Calu3 (cell line): ENCODE measurements at regions of chr6 and their contacts with region 1.

Region 1: DNA sequence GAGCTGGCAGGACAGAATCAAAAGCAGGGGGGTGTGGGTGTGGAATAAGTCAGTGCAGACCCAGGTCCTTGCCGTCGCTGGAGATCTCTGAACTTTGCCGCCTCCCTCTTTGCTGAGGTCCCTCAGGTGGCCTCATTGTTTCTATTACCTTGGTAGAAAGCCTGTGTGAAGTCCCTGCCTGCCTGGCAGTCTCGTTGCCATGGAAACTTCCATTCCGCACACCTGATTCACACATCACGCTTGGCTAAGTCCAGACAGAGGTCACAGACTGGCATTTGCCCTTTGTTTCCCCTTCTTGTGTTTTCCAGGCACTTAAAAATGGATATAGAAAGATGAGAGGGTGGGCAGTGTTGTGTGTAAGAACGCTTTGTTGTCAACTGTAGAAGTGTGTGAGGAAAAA is 260.6 kb downstream of the PRL start:
- DNase-seq: peak; percentile 92
- H3K4me3 Mint-ChIP-seq: peak overlapping the region; percentile 43
- H3K27ac Mint-ChIP-seq: peak overlapping the region; percentile 97
- H3K4me1 Mint-ChIP-seq: peaks cover 35% of the 10 kb centered on the region
- H3K27me3 Mint-ChIP-seq: no peaks in the 10 kb centered on the region
- CTCF ChIP-seq: no peak

Region 2: GRCh38 chr6:21731411-21732031 is 304.8 kb before region 1 on chr6:
- CTCF ChIA-PET with region 1: no interaction called
- intact Hi-C with region 1: loop called (anchors 1 kb)
- DNase-seq: peak; percentile 74
- H3K4me3 Mint-ChIP-seq: no peak overlapping the region
- H3K27ac Mint-ChIP-seq: peak overlapping the region; percentile 22
- H3K4me1 Mint-ChIP-seq: peaks cover 62% of the 10 kb centered on the region
- H3K27me3 Mint-ChIP-seq: no peaks in the 10 kb centered on the region
- CTCF ChIP-seq: no peak

Region 3: DNA sequence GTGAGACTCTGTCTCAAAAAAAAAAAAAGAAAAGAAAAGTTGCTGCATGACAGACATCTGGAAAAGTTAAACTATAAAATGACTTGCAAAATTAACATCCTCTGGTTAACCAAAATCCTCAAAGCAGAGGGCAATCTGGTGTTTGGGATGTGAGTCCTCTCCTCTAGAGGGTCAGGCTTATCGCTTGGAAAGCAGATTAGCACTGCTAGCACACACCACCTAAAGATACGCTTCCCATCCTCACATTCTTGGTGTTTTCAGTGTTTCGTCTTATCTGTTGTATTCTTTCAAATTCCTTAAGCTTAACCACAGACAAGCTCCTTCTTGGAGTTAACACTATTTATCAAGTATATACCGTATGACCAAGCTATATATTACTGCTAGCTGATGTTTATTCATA is 244.7 kb before region 1 on chr6:
- CTCF ChIA-PET with region 1: no interaction called
- intact Hi-C with region 1: no loop called
- DNase-seq: no peak
- H3K4me3 Mint-ChIP-seq: no peak overlapping the region
- H3K27ac Mint-ChIP-seq: no peak overlapping the region
- H3K4me1 Mint-ChIP-seq: no peaks in the 10 kb centered on the region
- H3K27me3 Mint-ChIP-seq: no peaks in the 10 kb centered on the region
- CTCF ChIP-seq: no peak

Region 4: DNA sequence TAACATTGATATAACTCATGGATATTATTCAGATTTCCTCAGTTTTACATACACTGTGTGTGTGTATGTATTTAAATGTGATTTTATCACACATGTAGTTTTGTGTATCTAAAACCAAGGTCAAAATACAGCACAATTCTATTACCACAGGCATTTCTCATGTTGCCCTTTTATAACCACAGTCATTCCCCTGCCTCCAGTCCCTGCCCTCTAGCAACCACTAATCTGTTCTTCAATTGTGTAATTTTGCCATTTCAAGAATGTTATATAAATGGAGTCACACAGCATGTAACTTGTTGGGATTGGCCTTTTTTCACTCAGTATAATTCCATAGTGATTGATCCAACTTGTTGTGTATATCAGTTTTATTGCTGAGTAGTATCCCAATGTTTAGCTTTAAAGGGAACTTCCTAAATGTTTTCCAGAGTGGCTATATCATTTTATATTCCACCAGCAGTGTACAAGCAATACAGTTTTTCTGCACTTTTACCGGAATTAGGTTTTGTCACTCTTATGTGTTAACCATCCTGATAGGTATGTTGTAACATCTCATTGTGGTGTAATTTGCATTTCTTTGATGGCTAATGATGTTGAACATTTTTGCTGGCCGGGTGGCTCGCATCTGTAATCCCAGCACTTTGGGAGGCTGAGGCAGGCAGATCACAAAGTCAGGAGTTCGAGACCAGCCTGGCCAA is 104.5 kb before region 1 on chr6:
- CTCF ChIA-PET with region 1: no interaction called
- intact Hi-C with region 1: loop called (anchors 5 kb)
- DNase-seq: no peak
- H3K4me3 Mint-ChIP-seq: no peak overlapping the region
- H3K27ac Mint-ChIP-seq: no peak overlapping the region
- H3K4me1 Mint-ChIP-seq: peaks cover 42% of the 10 kb centered on the region
- H3K27me3 Mint-ChIP-seq: no peaks in the 10 kb centered on the region
- CTCF ChIP-seq: no peak

Region 5: GRCh38 chr6:21987501-21987957 is 48.7 kb before region 1 on chr6:
- CTCF ChIA-PET with region 1: interaction called, 4 read pairs
- intact Hi-C with region 1: loop called (anchors 2 kb)
- DNase-seq: peak; percentile 87
- H3K4me3 Mint-ChIP-seq: peak overlapping the region; percentile 28
- H3K27ac Mint-ChIP-seq: peak overlapping the region; percentile 72
- H3K4me1 Mint-ChIP-seq: peaks cover 37% of the 10 kb centered on the region
- H3K27me3 Mint-ChIP-seq: no peaks in the 10 kb centered on the region
- CTCF ChIP-seq: no peak

Region 6: DNA sequence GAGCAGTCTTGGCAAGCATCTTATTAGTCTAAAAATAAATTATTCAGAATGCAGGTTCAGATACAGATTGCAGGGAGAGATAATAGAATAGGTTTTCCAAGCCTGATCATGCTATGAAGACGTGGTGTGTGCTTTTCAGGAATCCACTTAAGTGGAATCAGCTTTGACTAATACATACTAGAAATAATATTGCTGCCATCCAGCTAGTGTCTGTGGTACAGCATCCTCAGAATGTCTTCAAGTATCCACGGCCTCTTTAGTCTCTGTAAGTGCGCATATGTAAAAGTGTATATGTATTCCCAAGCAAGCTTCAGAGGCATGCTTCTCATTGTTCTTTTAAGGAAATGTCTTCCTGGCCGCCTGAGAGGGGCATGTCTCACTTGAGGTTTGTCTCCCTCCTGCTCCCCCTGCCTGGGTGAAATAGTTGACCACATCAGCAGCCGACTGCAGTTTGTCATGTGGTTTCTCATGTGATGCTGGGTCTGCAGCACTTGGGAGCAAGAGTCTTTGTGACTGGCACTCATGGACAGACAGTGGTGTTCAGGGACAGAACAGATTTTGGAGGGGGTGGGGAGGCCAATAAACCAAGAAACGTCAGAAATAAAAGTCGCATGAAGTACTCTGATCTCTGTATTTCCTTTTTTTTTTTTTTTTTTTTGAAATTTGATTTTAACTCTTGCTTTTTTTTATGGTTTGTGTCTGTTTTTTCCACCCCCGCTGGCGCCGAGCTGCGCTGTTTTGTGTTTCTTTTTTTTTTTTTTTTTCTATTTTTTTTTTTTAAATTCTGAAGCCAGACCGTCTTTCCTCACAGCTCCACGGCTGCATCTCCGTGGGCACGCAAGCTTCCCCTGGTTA is 109.8 kb after region 1 on chr6:
- CTCF ChIA-PET with region 1: no interaction called
- intact Hi-C with region 1: loop called (anchors 2 kb)
- DNase-seq: no peak
- H3K4me3 Mint-ChIP-seq: no peak overlapping the region
- H3K27ac Mint-ChIP-seq: no peak overlapping the region
- H3K4me1 Mint-ChIP-seq: peaks cover 20% of the 10 kb centered on the region
- H3K27me3 Mint-ChIP-seq: no peaks in the 10 kb centered on the region
- CTCF ChIP-seq: no peak